IMR-90 (cell line): ENCODE measurements at regions of chr15 and their contacts with region 1.

Region 1: GRCh38 chr15:38879909-38880471 is 315.4 kb upstream of the RASGRP1 start:
- DNase-seq: peak; percentile 55
- ATAC-seq: peak; percentile 18
- H3K4me3 ChIP-seq: no peak overlapping the region
- H3K27ac ChIP-seq: peak overlapping the region; percentile 71; the same call in 1 of the 2 replicates
- H3K4me1 ChIP-seq: peaks cover 27% of the 10 kb centered on the region
- H3K27me3 ChIP-seq: no peaks in the 10 kb centered on the region
- CTCF ChIP-seq: no peak
- POLR2A ChIP-seq: no peak
- RAD21 ChIP-seq: no peak

Region 2: DNA sequence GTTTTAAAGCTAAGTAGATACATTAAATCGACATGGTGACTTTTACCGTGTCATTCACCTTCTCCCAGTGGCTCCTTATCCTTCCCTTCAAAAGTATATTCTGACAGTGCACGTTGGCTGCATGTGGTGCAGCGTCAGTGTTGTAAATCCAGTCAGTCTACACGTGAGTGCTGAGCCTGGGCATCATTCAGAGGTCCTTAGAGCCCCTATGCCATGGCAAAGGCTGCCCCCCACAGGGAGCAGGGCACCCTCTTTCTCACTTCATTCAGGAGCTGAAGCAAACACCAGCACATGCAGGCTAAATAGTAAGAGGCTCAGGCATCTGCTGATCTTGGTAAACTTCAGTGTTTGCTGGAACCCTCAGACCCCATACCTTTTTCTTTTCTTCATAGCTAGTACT is 358.7 kb before region 1 on chr15:
- CTCF ChIA-PET with region 1: no interaction called
- POLR2A ChIA-PET with region 1: no interaction called
- dilution Hi-C with region 1: no loop called
- in situ Hi-C with region 1: no loop called
- intact Hi-C with region 1: no loop called
- DNase-seq: no peak
- ATAC-seq: no peak
- H3K4me3 ChIP-seq: no peak overlapping the region
- H3K27ac ChIP-seq: no peak overlapping the region
- H3K4me1 ChIP-seq: peaks cover 14% of the 10 kb centered on the region
- H3K27me3 ChIP-seq: no peaks in the 10 kb centered on the region
- CTCF ChIP-seq: no peak
- POLR2A ChIP-seq: no peak
- RAD21 ChIP-seq: no peak

Region 3: DNA sequence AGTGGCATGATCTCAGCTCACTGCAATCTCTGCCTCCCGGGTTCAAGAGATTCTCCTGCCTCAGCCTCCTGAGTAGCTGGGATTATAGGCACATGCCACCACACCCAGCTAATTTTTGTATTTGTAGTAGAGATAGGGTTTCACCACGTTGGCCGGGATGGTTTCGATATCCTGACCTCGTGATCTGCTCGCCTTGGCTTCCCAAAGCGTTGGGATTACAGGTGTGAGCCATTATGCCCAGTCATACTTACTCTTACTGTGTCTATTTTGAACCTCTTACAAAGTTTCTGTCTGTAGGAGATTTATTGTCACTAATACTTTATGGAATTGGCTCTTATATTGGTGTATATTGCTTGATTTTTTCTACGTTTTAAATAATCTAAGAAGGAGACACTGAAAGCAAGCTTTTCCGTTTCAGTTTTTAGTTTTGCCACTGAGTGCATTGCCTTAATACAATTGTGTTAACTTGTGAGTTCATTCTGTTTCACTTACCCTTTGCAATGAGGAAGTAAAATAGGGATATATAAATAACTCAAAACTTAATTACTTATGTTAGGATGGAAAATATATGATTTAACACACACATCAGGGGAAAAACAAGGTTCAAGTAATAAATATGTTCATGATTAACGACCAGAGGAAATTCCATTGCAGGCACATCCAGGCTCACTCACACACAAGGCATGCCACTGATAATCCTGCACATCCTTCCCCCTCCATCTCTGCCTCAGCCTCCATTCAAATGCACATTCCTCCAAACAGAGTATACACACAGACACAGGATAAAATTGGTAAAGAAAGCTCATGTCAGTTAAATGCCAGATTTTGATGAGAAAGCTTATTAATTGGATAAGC is 36.0 kb before region 1 on chr15:
- CTCF ChIA-PET with region 1: no interaction called
- POLR2A ChIA-PET with region 1: no interaction called
- dilution Hi-C with region 1: no loop called
- in situ Hi-C with region 1: no loop called
- intact Hi-C with region 1: loop called (anchors 5 kb)
- DNase-seq: peak; percentile 81
- ATAC-seq: peak; percentile 88
- H3K4me3 ChIP-seq: no peak overlapping the region
- H3K27ac ChIP-seq: peak overlapping the region; percentile 99
- H3K4me1 ChIP-seq: peaks cover 22% of the 10 kb centered on the region
- H3K27me3 ChIP-seq: no peaks in the 10 kb centered on the region
- CTCF ChIP-seq: no peak
- POLR2A ChIP-seq: no peak
- RAD21 ChIP-seq: no peak

Region 4: GRCh38 chr15:39580117-39580484 is 700.1 kb after region 1 on chr15:
- CTCF ChIA-PET with region 1: no interaction called
- POLR2A ChIA-PET with region 1: no interaction called
- dilution Hi-C with region 1: no loop called
- in situ Hi-C with region 1: no loop called
- intact Hi-C with region 1: no loop called
- DNase-seq: peak; percentile 98
- ATAC-seq: peak; percentile 30
- H3K4me3 ChIP-seq: peak overlapping the region; percentile 46
- H3K27ac ChIP-seq: peak overlapping the region; percentile 78
- H3K4me1 ChIP-seq: peaks cover 8% of the 10 kb centered on the region
- H3K27me3 ChIP-seq: no peaks in the 10 kb centered on the region
- CTCF ChIP-seq: peak; percentile 99
- POLR2A ChIP-seq: no peak
- RAD21 ChIP-seq: peak; percentile 94